K562 (cell line): ENCODE measurements at regions of chr7 and their contacts with region 1.

Region 1: GRCh38 chr7:144098776-144099175 is 10.6 kb upstream of the OR2A2 start:
- DNase-seq: no peak
- ATAC-seq: no peak
- H3K4me3 ChIP-seq: no peak overlapping the region
- H3K27ac ChIP-seq: no peak overlapping the region
- H3K4me1 ChIP-seq: no peaks in the 10 kb centered on the region
- H3K27me3 ChIP-seq: no peaks in the 10 kb centered on the region
- CTCF ChIP-seq: no peak
- EP300 ChIP-seq: no peak
- POLR2A ChIP-seq: no peak
- RAD21 ChIP-seq: no peak

Region 2: DNA sequence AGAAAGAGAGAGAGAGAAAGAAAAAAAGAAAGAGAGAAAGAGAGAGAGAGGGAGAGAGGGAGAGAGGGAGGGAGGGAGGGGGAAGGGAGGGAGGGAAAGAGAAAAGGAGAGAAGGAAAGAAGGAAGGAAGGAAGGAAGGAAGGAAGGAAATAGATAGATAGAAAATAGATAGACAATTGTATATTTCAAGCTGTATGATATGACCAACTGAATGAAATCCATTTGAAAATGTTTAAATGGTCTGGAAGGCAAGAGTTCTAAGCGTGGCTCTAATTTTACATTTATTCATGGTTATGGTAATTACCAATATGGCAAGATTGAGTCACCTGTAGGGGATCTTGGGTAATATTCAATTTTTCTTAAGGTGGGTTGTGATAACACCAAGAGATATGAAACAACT is 60.1 kb after region 1 on chr7:
- CTCF ChIA-PET with region 1: no interaction called
- POLR2A ChIA-PET with region 1: no interaction called
- in situ Hi-C with region 1: no loop called
- intact Hi-C with region 1: loop called (anchors 10 kb)
- DNase-seq: no peak
- ATAC-seq: no peak
- H3K4me3 ChIP-seq: no peak overlapping the region
- H3K27ac ChIP-seq: no peak overlapping the region
- H3K4me1 ChIP-seq: no peaks in the 10 kb centered on the region
- H3K27me3 ChIP-seq: no peaks in the 10 kb centered on the region
- CTCF ChIP-seq: no peak
- EP300 ChIP-seq: no peak
- POLR2A ChIP-seq: no peak
- RAD21 ChIP-seq: no peak